Natural killer cell (primary cell): ENCODE measurements at regions of chr11 and their contacts with region 1.

Region 1: GRCh38 chr11:76207642-76208401 is 1.5 kb upstream of the WNT11 start:
- DNase-seq: peak; percentile 77 to 90
- ATAC-seq: peak; percentile 80 to 88 (median 81)
- H3K4me3 ChIP-seq: peak overlapping the region; percentile 52
- H3K4me3 Mint-ChIP-seq: peak overlapping the region; percentile 93
- H3K27ac ChIP-seq: no peak overlapping the region
- H3K27ac Mint-ChIP-seq: peak overlapping the region in 1 of 2 donors; percentile 38
- H3K4me1 ChIP-seq: peaks cover 49% of the 10 kb centered on the region
- H3K4me1 Mint-ChIP-seq: peaks cover 8 to 40% of the 10 kb centered on the region in 2 donors
- H3K27me3 ChIP-seq: peaks cover 59% of the 10 kb centered on the region
- H3K27me3 Mint-ChIP-seq: peaks cover 18 to 50% of the 10 kb centered on the region in 2 donors
- CTCF ChIP-seq: peak; percentile 99

Region 2: DNA sequence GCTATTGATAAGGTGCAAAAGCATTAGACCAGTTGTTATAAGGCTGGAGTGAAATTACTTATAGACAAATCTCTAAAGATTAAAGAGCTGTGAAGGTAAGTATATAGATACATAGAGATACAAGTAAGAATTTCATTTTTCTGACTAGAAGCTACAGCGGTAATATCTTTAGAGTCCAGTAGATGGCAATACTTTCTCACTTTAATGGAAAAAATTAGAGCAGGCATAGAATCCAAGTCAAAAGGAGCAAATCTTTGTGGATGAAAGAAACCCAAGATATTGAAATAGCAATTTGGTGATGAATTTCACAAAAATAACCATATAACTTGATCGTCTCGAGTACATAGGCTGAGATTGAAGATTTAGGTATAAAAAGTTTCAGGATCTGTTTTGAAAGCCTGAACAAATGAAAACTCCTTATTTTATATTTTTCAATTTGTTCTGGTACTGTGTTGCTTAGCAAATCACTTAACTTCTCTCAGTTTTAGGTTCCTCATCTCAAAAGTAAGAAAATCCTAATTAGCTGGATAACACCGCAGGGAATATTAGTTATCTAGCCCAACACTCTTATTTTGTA is 310.9 kb before region 1 on chr11:
- intact Hi-C with region 1: loop called (anchors 5 kb)
- DNase-seq: peak in 1 of 2 donors; percentile 53
- ATAC-seq: peak in 2 of 3 donors; percentile 50 to 64
- H3K4me3 ChIP-seq: no peak overlapping the region
- H3K4me3 Mint-ChIP-seq: no peak overlapping the region
- H3K27ac ChIP-seq: no peak overlapping the region
- H3K27ac Mint-ChIP-seq: no peak overlapping the region
- H3K4me1 ChIP-seq: no peaks in the 10 kb centered on the region
- H3K4me1 Mint-ChIP-seq: peaks cover 0 to 9% of the 10 kb centered on the region in 2 donors
- H3K27me3 ChIP-seq: no peaks in the 10 kb centered on the region
- H3K27me3 Mint-ChIP-seq: no peaks in the 10 kb centered on the region
- CTCF ChIP-seq: peak; percentile 74

Region 3: GRCh38 chr11:76131671-76132631 is 75.9 kb before region 1 on chr11:
- intact Hi-C with region 1: no loop called
- DNase-seq: no peak
- ATAC-seq: no peak
- H3K4me3 ChIP-seq: no peak overlapping the region
- H3K4me3 Mint-ChIP-seq: no peak overlapping the region
- H3K27ac ChIP-seq: no peak overlapping the region
- H3K27ac Mint-ChIP-seq: no peak overlapping the region
- H3K4me1 ChIP-seq: no peaks in the 10 kb centered on the region
- H3K4me1 Mint-ChIP-seq: peaks cover 0 to 15% of the 10 kb centered on the region in 2 donors
- H3K27me3 ChIP-seq: no peaks in the 10 kb centered on the region
- H3K27me3 Mint-ChIP-seq: no peaks in the 10 kb centered on the region
- CTCF ChIP-seq: no peak

Region 4: DNA sequence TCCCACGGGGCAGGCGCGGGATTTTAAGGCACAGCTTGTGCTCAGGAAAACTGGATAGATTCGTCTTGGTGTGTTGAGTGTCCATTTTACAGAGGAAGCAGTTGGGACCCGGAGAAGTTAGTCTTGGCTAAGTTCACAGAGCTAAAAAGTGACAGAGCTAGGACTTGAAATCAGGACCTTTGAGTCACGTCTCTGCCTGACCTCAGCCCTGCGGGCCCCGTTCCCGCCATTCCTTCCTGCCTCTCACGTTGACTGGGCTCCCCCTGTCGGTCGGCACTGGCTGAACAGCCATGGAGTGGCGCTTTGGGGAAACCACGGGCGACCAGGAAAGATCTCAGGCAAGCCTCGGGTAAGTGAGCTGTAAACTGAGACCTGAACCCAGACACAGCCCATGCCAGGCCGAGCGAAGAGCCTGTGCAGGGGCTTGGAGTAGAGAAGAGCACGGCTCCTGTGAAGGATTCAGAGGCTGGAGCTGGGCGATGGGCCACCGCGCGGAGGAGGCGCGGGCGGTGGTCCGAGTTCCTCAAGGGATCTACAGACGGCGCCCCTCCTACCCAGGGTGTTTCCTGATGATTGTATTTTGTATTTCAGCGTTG is 55.6 kb before region 1 on chr11:
- intact Hi-C with region 1: loop called (anchors 5 kb)
- DNase-seq: peak; percentile 73 to 85
- ATAC-seq: peak; percentile 82 to 85 (median 83)
- H3K4me3 ChIP-seq: peak overlapping the region; percentile 34
- H3K4me3 Mint-ChIP-seq: peak overlapping the region; percentile 84
- H3K27ac ChIP-seq: no peak overlapping the region
- H3K27ac Mint-ChIP-seq: peak overlapping the region; percentile 88 to 92
- H3K4me1 ChIP-seq: peaks cover 30% of the 10 kb centered on the region
- H3K4me1 Mint-ChIP-seq: peaks cover 36 to 38% of the 10 kb centered on the region in 2 donors
- H3K27me3 ChIP-seq: no peaks in the 10 kb centered on the region
- H3K27me3 Mint-ChIP-seq: peaks cover 0 to 2% of the 10 kb centered on the region in 2 donors
- CTCF ChIP-seq: peak; percentile 85

Region 5: DNA sequence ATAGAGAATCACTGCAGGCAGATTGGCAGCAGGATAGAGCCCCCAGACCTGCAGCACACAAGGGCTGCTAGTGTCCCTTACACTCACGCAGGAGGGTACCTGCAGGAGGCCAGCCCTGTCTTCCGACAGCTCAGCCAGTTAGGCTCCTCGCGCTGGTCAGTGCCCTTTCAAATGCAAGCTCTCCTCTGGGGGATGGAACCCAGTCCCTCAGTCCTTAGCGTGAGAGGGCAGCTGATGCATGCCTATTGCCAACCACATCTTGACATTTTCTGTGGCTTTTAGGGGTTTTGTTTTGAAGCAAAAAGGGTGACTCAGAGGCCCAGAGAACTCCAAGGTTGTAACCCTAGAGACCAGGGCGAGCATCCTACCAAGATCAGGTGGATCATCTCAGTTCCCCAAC is 41.5 kb before region 1 on chr11:
- intact Hi-C with region 1: no loop called
- DNase-seq: no peak
- ATAC-seq: no peak
- H3K4me3 ChIP-seq: no peak overlapping the region
- H3K4me3 Mint-ChIP-seq: no peak overlapping the region
- H3K27ac ChIP-seq: no peak overlapping the region
- H3K27ac Mint-ChIP-seq: no peak overlapping the region
- H3K4me1 ChIP-seq: peaks cover 26% of the 10 kb centered on the region
- H3K4me1 Mint-ChIP-seq: peaks cover 4 to 19% of the 10 kb centered on the region in 2 donors
- H3K27me3 ChIP-seq: no peaks in the 10 kb centered on the region
- H3K27me3 Mint-ChIP-seq: no peaks in the 10 kb centered on the region
- CTCF ChIP-seq: no peak

Region 6: DNA sequence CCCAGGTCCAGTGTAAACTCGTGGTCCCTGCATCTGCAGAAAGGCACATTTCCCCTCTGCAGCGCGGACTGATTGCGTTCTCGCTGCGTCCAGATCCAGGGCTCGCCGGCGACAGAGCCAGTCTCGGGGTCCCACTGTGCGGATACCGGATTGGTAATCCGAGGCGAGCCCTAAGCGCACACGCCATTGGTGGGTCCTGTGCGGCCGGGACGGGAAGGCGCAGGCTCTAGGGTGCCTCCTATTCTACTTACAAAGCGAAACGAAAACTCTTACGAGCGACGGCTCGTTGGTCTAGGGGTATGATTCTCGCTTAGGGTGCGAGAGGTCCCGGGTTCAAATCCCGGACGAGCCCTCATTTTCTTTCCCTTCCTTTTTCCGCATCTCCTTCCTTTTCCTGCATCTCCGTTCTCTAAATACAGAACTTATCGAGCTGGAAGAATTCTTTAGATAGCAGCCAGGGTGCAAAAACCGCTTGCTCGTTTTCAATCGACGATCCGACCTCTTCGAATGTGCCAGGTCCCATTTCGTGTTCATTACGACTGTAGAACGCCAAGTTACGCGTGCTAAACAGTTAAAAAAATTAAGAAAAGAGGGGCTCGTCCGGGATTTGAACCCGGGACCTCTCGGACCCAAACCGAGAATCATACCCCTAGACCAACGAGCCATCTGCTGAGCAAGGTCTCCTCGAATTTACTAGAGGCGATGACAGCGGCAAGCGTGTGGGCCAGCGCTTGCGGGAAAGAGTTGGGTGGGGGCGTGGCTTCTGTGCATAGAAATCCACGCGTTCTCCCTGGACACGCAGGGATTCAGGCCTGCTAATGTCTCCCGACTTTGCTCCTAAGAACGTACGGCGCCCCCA is 27.6 kb after region 1 on chr11:
- intact Hi-C with region 1: loop called (anchors 2 kb)
- DNase-seq: peak; percentile 90 to 96
- ATAC-seq: peak; percentile 86 to 94 (median 90)
- H3K4me3 ChIP-seq: peak overlapping the region; percentile 96
- H3K4me3 Mint-ChIP-seq: peak overlapping the region; percentile 93
- H3K27ac ChIP-seq: peak overlapping the region; percentile 62
- H3K27ac Mint-ChIP-seq: peak overlapping the region; percentile 95 to 97
- H3K4me1 ChIP-seq: peaks cover 55% of the 10 kb centered on the region
- H3K4me1 Mint-ChIP-seq: peaks cover 28 to 46% of the 10 kb centered on the region in 2 donors
- H3K27me3 ChIP-seq: no peaks in the 10 kb centered on the region
- H3K27me3 Mint-ChIP-seq: peaks cover 0 to 10% of the 10 kb centered on the region in 2 donors
- CTCF ChIP-seq: no peak

Region 7: DNA sequence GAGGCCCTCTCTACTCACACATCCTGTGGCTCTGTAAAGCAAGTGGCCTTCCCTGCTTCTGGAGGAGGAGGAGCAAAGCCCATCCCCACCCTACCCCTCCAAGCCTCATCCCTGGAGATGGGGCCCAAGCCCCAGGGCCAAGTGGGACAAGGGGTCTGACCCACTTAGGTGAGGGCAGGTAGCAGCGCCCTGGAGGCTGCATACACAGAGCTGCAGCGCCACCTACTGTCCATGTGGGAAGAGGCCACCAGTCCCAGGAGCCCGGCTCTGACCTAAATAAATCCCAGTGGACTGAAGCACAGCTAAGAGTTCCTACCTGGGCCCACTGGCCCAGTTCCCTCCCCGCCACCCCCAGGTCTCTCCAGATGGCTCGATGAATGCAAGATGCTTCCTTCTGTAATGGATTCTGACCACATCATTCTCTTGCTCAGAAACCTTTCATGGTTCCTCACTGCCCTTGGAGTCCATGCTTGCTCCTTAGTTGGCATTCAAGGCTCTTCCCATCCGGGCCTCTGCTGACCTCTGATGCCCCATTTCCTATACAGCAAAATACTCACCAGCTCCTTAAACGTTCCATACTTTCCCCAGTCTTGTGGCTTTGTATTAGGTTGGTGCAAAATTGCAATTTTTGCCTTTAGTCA is 111.0 kb after region 1 on chr11:
- intact Hi-C with region 1: loop called (anchors 1 kb)
- DNase-seq: peak; percentile 75 to 94
- ATAC-seq: peak; percentile 87 to 98 (median 95)
- H3K4me3 ChIP-seq: no peak overlapping the region
- H3K4me3 Mint-ChIP-seq: no peak overlapping the region
- H3K27ac ChIP-seq: no peak overlapping the region
- H3K27ac Mint-ChIP-seq: no peak overlapping the region
- H3K4me1 ChIP-seq: no peaks in the 10 kb centered on the region
- H3K4me1 Mint-ChIP-seq: no peaks in the 10 kb centered on the region
- H3K27me3 ChIP-seq: no peaks in the 10 kb centered on the region
- H3K27me3 Mint-ChIP-seq: peaks cover 31 to 35% of the 10 kb centered on the region in 2 donors
- CTCF ChIP-seq: peak; percentile 84

Region 8: GRCh38 chr11:76444384-76445123 is 236.7 kb after region 1 on chr11 and contains the start of gene EMSY:
- intact Hi-C with region 1: no loop called
- DNase-seq: peak; percentile 82 to 96
- ATAC-seq: peak; percentile 91 to 97 (median 94)
- H3K4me3 ChIP-seq: peak within 1 kb of the TSS; percentile 84
- H3K4me3 Mint-ChIP-seq: peak within 1 kb of the TSS; percentile 98
- H3K27ac ChIP-seq: peak within 1 kb of the TSS; percentile 86
- H3K27ac Mint-ChIP-seq: peak within 1 kb of the TSS; percentile 98 to 99
- H3K4me1 ChIP-seq: peaks cover 12% of the 10 kb centered on the region
- H3K4me1 Mint-ChIP-seq: peaks cover 25 to 50% of the 10 kb centered on the region in 2 donors
- H3K27me3 ChIP-seq: no peaks in the 10 kb centered on the region
- H3K27me3 Mint-ChIP-seq: no peaks in the 10 kb centered on the region
- CTCF ChIP-seq: no peak
- total RNA-seq, gene EMSY: 36.0 to 43.8 (median 39.4) TPM

Region 9: DNA sequence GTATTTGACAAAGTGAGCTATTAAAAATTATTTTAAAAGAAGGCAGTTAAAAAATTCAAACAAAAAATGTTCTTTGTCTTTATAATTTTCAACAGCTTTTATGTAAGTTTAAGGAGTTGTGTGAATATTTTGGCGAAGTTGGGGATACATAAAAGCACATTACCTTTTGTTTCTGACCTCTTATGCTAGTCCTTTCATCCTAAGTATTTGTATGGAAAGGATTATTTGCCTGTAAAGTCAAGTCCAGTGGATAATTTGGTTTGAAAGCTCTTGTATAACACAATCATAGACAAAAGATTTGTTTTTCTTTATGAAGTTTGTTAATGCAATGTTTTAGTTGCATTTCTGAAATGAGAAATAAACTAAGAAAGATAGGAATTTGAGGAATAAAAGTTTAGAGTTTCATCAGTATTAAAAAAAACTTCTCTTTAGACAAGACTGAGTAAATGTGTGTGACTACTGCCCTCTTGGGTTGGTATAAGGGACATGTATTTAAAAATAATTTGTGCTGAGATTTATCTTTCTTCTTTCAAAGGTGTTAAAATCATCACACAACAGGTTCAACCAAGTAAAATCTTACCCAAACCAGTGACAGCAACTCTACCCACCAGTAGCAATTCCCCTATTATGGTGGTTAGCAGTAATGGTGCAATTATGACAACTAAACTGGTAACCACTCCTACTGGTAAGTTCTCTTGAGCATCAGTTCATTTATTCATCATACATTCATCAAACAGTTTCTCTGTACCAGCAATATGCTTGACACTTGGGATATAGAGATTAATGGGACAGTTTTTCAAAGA is 305.2 kb after region 1 on chr11:
- intact Hi-C with region 1: loop called (anchors 1 kb)
- DNase-seq: peak in 1 of 2 donors; percentile 38
- ATAC-seq: peak; percentile 39 to 71 (median 64)
- H3K4me3 ChIP-seq: no peak overlapping the region
- H3K4me3 Mint-ChIP-seq: no peak overlapping the region
- H3K27ac ChIP-seq: no peak overlapping the region
- H3K27ac Mint-ChIP-seq: peak overlapping the region in 1 of 2 donors; percentile 34
- H3K4me1 ChIP-seq: no peaks in the 10 kb centered on the region
- H3K4me1 Mint-ChIP-seq: peaks cover 0 to 5% of the 10 kb centered on the region in 2 donors
- H3K27me3 ChIP-seq: no peaks in the 10 kb centered on the region
- H3K27me3 Mint-ChIP-seq: no peaks in the 10 kb centered on the region
- CTCF ChIP-seq: peak; percentile 49

Region 10: DNA sequence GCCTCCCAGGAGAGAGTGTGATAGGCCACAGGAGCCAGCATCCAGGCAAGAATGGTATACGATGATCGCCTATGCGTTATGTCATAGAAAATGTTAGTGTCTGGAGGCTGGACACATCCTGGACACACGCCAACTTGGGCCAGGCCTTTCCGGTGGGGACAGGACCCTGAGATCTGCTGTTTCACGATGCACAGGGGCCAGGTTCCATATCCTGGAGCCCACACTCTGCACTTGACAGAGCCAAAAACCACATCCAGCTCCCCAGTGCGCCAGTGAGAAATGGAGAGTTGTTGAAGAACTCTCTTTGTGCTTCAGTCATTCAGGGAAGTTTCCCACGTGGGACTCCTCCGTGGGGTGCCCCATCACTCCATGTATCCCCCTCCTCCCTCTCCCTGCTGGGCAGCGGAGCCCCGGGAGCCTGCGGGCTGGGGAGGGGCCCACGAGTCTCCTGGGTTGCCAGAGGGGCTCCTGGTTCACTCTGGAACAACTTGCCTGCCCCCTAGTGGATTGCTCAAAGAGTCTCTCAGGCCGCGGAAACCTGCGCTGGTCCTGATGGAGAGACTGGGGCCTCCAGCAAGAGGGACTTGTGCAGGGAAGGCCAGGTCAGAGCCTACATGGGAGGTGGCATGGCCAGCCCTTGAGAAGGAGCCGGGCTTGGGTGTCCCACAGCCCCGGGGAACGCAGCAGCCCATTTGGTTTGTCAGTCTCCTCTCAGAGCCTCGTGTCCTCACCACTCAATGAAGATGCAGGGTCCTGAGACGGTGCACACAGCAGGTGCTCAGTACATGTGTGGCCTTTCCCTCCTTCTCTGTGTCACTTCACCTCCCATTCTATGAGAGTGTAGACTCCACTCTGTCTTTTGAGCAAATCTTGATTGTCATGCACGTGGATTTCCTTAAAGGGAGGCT is 472.9 kb after region 1 on chr11:
- intact Hi-C with region 1: loop called (anchors 5 kb)
- DNase-seq: peak; percentile 40 to 73
- ATAC-seq: peak; percentile 45 to 78 (median 77)
- H3K4me3 ChIP-seq: no peak overlapping the region
- H3K4me3 Mint-ChIP-seq: no peak overlapping the region
- H3K27ac ChIP-seq: no peak overlapping the region
- H3K27ac Mint-ChIP-seq: no peak overlapping the region
- H3K4me1 ChIP-seq: peaks cover 8% of the 10 kb centered on the region
- H3K4me1 Mint-ChIP-seq: peaks cover 0 to 16% of the 10 kb centered on the region in 2 donors
- H3K27me3 ChIP-seq: peaks cover 3% of the 10 kb centered on the region
- H3K27me3 Mint-ChIP-seq: peaks cover 11 to 23% of the 10 kb centered on the region in 2 donors
- CTCF ChIP-seq: peak; percentile 78